ENCODE measurements at regions of chr11 and their contacts with region 1.

Region 1: DNA sequence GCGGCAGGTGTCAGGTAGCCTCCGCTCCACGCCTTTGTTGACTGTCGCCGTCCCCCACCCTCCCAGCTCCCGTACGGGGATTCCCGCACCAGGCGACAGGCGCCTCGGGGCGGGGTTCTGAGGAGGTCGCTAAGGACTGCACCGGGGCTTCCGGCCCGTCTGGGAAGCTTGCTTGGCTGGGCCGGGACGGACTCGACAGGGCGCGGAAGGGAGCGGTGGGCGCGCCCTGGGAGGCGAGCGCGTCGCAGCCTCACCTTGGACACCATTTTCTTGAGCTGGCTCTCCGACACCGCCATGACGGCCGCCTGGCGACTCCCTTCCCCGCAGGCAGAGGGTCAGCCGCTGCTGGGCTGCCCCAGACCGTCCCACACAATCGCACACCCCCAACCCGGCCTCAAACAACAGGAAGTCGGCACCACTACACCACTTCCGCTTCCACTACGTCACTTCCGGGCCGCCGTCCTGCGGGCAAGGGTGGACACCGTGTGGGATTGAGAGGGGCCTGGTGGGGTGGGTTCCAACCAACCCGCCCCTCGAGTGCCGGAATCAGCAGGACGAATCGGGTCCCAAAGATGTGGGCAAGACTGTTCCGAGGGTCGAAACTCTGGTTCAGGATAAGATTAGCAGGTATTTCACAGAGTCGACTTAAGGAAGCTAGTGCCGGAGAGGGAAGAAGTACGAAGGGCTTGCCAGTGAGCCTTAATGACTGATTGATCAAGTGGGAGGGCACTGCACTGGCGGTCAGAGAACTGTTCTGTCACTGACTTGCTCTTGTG is at the start of gene TSG101:
- DNase-seq: peak; percentile 95
- ATAC-seq: peak; percentile 78 to 94 (median 83)
- H3K4me3 ChIP-seq: peak within 1 kb of the TSS; percentile 54
- H3K4me3 Mint-ChIP-seq: peak within 1 kb of the TSS; percentile 99
- H3K27ac ChIP-seq: peak within 1 kb of the TSS; percentile 93
- H3K27ac Mint-ChIP-seq: peak within 1 kb of the TSS; percentile 100
- H3K4me1 ChIP-seq: peaks cover 16% of the 10 kb centered on the region
- H3K4me1 Mint-ChIP-seq: peaks cover 43 to 45% of the 10 kb centered on the region in 2 donors
- H3K27me3 ChIP-seq: no peaks in the 10 kb centered on the region
- H3K27me3 Mint-ChIP-seq: no peaks in the 10 kb centered on the region
- CTCF ChIP-seq: no peak
- total RNA-seq, gene TSG101: 22.7 to 35.2 (median 23.0) TPM

Region 2: DNA sequence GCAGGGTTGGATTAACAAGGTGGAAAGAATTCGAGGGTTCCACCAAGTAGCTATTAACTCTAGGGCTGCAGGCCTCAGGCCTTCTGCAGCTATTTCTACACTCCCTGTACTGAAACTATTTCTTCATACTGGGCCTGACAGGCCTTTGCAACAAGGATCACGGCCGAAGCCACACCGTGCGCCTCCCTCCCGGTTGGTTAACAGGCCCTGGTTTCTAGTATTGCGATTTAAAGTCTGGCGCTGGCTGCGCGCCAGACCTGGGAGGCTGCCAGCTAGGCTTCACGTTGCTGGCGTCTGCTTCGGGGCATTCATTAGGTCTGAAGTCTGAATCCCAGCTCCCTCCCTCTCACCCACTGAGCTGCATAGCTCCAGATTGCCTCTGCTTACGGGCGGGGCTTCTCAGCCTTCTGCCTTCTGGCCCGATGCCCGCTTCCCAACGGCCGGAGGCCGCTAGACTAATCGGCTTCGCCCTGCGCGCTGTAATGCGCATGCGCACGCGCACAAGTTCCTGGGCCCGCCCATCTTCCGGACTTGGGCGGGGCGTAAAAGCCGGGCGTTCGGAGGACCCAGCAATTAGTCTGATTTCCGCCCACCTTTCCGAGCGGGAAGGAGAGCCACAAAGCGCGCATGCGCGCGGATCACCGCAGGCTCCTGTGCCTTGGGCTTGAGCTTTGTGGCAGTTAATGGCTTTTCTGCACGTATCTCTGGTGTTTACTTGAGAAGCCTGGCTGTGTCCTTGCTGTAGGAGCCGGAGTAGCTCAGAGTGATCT is 130.8 kb before region 1 on chr11:
- intact Hi-C with region 1: loop called (anchors 2 kb)
- DNase-seq: peak; percentile 95 to 98
- ATAC-seq: peak; percentile 71 to 84 (median 71)
- H3K4me3 ChIP-seq: peak overlapping the region; percentile 83
- H3K4me3 Mint-ChIP-seq: peak overlapping the region; percentile 98
- H3K27ac ChIP-seq: peak overlapping the region; percentile 78
- H3K27ac Mint-ChIP-seq: peak overlapping the region; percentile 96
- H3K4me1 ChIP-seq: peaks cover 24% of the 10 kb centered on the region
- H3K4me1 Mint-ChIP-seq: peaks cover 32 to 57% of the 10 kb centered on the region in 2 donors
- H3K27me3 ChIP-seq: no peaks in the 10 kb centered on the region
- H3K27me3 Mint-ChIP-seq: no peaks in the 10 kb centered on the region
- CTCF ChIP-seq: no peak

Region 3: GRCh38 chr11:18471995-18472394 is 54.7 kb before region 1 on chr11:
- intact Hi-C with region 1: no loop called
- DNase-seq: no peak
- ATAC-seq: no peak
- H3K4me3 ChIP-seq: no peak overlapping the region
- H3K4me3 Mint-ChIP-seq: no peak overlapping the region
- H3K27ac ChIP-seq: no peak overlapping the region
- H3K27ac Mint-ChIP-seq: no peak overlapping the region
- H3K4me1 ChIP-seq: no peaks in the 10 kb centered on the region
- H3K4me1 Mint-ChIP-seq: no peaks in the 10 kb centered on the region
- H3K27me3 ChIP-seq: no peaks in the 10 kb centered on the region
- H3K27me3 Mint-ChIP-seq: no peaks in the 10 kb centered on the region
- CTCF ChIP-seq: no peak

Region 4: DNA sequence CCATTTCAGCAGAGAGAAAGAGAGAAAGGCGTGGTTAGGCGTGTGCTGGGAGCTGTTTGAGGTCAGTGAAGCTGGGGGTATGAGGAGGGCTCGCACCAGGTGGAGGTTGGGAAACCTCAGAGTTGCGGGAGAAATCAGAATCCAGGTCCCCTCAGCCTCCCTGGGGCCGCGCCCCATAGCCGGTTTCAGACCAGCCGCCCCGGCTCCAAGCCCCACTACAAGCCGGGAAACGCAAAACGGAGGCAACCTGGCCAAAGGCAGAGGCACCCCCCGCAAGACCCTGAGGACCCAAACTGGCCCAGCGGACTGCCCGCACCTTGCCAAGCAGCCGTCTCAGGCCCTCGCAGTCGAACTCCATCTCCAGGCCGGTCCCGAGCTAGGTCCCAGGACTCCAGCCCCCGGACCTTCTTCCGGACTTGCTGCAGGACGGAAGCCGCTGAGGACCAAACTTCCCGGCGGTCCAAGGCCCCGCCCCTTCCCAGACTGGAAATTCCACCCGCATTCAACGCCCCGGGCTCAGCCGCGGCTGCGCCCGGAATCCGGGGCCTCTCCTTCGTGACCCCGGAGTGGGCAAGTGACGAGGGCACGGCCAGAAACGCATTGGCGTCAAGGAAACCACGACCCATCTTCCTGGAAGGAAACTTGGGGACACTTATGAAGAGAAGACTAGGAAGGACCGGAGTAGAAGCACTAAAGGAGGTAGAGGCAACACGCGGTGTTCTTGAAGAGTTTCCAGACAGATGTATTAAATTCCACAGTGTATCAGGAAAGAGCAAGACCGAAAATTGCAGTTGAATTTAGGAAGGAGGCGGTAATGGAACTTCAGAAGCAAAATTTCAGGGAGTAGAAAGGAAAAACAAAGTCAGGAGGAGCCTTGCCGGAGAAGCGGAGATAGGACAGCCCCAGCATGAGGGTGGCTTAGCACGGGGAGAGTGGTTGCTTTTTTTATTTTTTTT is 61.9 kb after region 1 on chr11 and contains the start of gene UEVLD:
- intact Hi-C with region 1: loop called (anchors 5 kb)
- DNase-seq: peak; percentile 72 to 80
- ATAC-seq: peak; percentile 54 to 63 (median 55)
- H3K4me3 ChIP-seq: peak within 1 kb of the TSS; percentile 91
- H3K4me3 Mint-ChIP-seq: no peak within 1 kb of the TSS
- H3K27ac ChIP-seq: peak within 1 kb of the TSS; percentile 96
- H3K27ac Mint-ChIP-seq: no peak within 1 kb of the TSS
- H3K4me1 ChIP-seq: peaks cover 14% of the 10 kb centered on the region
- H3K4me1 Mint-ChIP-seq: peaks cover 0 to 5% of the 10 kb centered on the region in 2 donors
- H3K27me3 ChIP-seq: no peaks in the 10 kb centered on the region
- H3K27me3 Mint-ChIP-seq: no peaks in the 10 kb centered on the region
- CTCF ChIP-seq: no peak
- total RNA-seq, gene UEVLD: 13.6 to 17.8 (median 15.6) TPM

Measured in natural killer cell (primary cell).